CD4-positive, alpha-beta T cell (primary cell): ENCODE measurements at regions of chr16 and their contacts with region 1.

Region 1: GRCh38 chr16:24883714-24884151 is 38.0 kb downstream of the SLC5A11 start:
- DNase-seq: no peak
- ATAC-seq: no peak
- H3K4me3 ChIP-seq: no peak overlapping the region
- H3K4me3 Mint-ChIP-seq: no peak overlapping the region
- H3K27ac ChIP-seq: no peak overlapping the region
- H3K27ac Mint-ChIP-seq: no peak overlapping the region
- H3K4me1 ChIP-seq: no peaks in the 10 kb centered on the region
- H3K4me1 Mint-ChIP-seq: no peaks in the 10 kb centered on the region
- H3K27me3 ChIP-seq: peaks cover 0 to 6% of the 10 kb centered on the region in 2 experiments
- H3K27me3 Mint-ChIP-seq: no peaks in the 10 kb centered on the region
- CTCF ChIP-seq: no peak

Region 2: DNA sequence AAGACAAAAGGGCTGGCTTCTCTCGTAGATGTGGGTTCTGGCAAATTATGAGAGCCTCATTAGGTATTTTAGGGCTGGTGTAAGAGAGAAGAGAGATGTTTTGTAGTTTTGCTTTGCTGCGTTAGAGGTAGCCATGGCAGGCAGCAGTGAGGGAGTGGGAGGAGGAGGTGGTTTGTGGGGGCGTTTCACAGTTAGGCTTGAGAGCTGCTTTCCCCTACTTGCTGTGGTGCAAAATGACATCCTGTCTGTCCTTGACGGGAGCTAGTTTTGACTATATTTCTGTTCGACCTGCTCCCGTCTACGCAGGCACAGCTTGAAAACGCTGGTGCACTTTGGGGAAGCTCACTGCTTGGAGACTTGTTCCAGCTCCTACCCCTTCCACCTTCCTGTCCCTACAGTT is 37.5 kb after region 1 on chr16:
- CTCF ChIA-PET with region 1: no interaction called
- POLR2A ChIA-PET with region 1: interaction called, 3 read pairs
- intact Hi-C with region 1: loop called in 1 of 2 experiments (anchors 5 kb)
- DNase-seq: peak in 1 of 14 experiments; percentile 37
- ATAC-seq: no peak
- H3K4me3 ChIP-seq: no peak overlapping the region
- H3K4me3 Mint-ChIP-seq: no peak overlapping the region
- H3K27ac ChIP-seq: no peak overlapping the region
- H3K27ac Mint-ChIP-seq: peak overlapping the region; percentile 13
- H3K4me1 ChIP-seq: no peaks in the 10 kb centered on the region
- H3K4me1 Mint-ChIP-seq: peaks cover 7% of the 10 kb centered on the region
- H3K27me3 ChIP-seq: no peaks in the 10 kb centered on the region
- H3K27me3 Mint-ChIP-seq: no peaks in the 10 kb centered on the region
- CTCF ChIP-seq: no peak

Region 3: GRCh38 chr16:24943473-24943872 is 59.7 kb after region 1 on chr16:
- CTCF ChIA-PET with region 1: no interaction called
- POLR2A ChIA-PET with region 1: no interaction called
- intact Hi-C with region 1: loop called in 1 of 2 experiments (anchors 10 kb)
- DNase-seq: no peak
- ATAC-seq: no peak
- H3K4me3 ChIP-seq: no peak overlapping the region
- H3K4me3 Mint-ChIP-seq: no peak overlapping the region
- H3K27ac ChIP-seq: no peak overlapping the region
- H3K27ac Mint-ChIP-seq: no peak overlapping the region
- H3K4me1 ChIP-seq: no peaks in the 10 kb centered on the region
- H3K4me1 Mint-ChIP-seq: no peaks in the 10 kb centered on the region
- H3K27me3 ChIP-seq: no peaks in the 10 kb centered on the region
- H3K27me3 Mint-ChIP-seq: no peaks in the 10 kb centered on the region
- CTCF ChIP-seq: no peak

Region 4: GRCh38 chr16:24955982-24956731 is 72.4 kb after region 1 on chr16:
- CTCF ChIA-PET with region 1: no interaction called
- POLR2A ChIA-PET with region 1: no interaction called
- intact Hi-C with region 1: no loop called
- DNase-seq: no peak
- ATAC-seq: no peak
- H3K4me3 ChIP-seq: no peak overlapping the region
- H3K4me3 Mint-ChIP-seq: no peak overlapping the region
- H3K27ac ChIP-seq: no peak overlapping the region
- H3K27ac Mint-ChIP-seq: no peak overlapping the region
- H3K4me1 ChIP-seq: no peaks in the 10 kb centered on the region
- H3K4me1 Mint-ChIP-seq: no peaks in the 10 kb centered on the region
- H3K27me3 ChIP-seq: no peaks in the 10 kb centered on the region
- H3K27me3 Mint-ChIP-seq: no peaks in the 10 kb centered on the region
- CTCF ChIP-seq: no peak